IMR-90 (cell line): ENCODE measurements at regions of chr2 and their contacts with region 1.

Region 1: GRCh38 chr2:69518841-69519240 is 81.6 kb upstream of the NFU1 start:
- DNase-seq: no peak
- ATAC-seq: no peak
- H3K4me3 ChIP-seq: no peak overlapping the region
- H3K27ac ChIP-seq: no peak overlapping the region
- H3K4me1 ChIP-seq: peaks cover 12% of the 10 kb centered on the region
- H3K27me3 ChIP-seq: no peaks in the 10 kb centered on the region
- CTCF ChIP-seq: no peak
- POLR2A ChIP-seq: no peak
- RAD21 ChIP-seq: no peak

Region 2: DNA sequence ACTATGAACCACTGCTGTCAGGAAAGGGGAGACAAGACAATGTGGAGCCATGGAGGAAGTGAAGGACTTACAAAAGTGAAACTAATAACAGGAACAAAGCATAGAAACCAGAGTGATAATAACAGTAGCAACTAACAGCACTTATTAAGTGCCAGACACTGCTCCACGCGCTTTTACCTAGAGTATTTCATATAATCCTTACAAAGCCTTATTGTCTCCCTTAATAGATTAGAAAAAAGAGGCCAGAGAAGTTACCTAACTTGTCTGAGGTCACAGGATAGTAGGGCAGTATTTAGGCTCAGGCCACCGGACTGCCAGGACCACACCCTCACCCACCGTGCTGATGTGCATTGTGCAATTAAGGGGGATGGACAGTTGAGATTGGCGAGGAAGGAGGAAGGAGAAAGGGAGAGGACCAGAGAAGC is 17.0 kb after region 1 on chr2:
- CTCF ChIA-PET with region 1: interaction called, 3 read pairs
- POLR2A ChIA-PET with region 1: interaction called, 5 read pairs
- dilution Hi-C with region 1: no loop called
- in situ Hi-C with region 1: no loop called
- intact Hi-C with region 1: loop called (anchors 1 kb)
- DNase-seq: no peak
- ATAC-seq: no peak
- H3K4me3 ChIP-seq: no peak overlapping the region
- H3K27ac ChIP-seq: no peak overlapping the region
- H3K4me1 ChIP-seq: 0 out of 2 replicates have a peak, but pooled peaks cover 2% of the 10 kb centered on the region
- H3K27me3 ChIP-seq: no peaks in the 10 kb centered on the region
- CTCF ChIP-seq: no peak
- POLR2A ChIP-seq: no peak
- RAD21 ChIP-seq: no peak